IMR-90 (cell line): ENCODE measurements at regions of chr20 and their contacts with region 1.

Region 1: GRCh38 chr20:25486377-25486776 is 78.9 kb downstream of the GINS1 start:
- DNase-seq: peak; percentile 40
- ATAC-seq: peak; percentile 29
- H3K4me3 ChIP-seq: no peak overlapping the region
- H3K27ac ChIP-seq: no peak overlapping the region
- H3K4me1 ChIP-seq: peaks cover 3% of the 10 kb centered on the region
- H3K27me3 ChIP-seq: no peaks in the 10 kb centered on the region
- CTCF ChIP-seq: no peak
- POLR2A ChIP-seq: no peak
- RAD21 ChIP-seq: no peak

Region 2: DNA sequence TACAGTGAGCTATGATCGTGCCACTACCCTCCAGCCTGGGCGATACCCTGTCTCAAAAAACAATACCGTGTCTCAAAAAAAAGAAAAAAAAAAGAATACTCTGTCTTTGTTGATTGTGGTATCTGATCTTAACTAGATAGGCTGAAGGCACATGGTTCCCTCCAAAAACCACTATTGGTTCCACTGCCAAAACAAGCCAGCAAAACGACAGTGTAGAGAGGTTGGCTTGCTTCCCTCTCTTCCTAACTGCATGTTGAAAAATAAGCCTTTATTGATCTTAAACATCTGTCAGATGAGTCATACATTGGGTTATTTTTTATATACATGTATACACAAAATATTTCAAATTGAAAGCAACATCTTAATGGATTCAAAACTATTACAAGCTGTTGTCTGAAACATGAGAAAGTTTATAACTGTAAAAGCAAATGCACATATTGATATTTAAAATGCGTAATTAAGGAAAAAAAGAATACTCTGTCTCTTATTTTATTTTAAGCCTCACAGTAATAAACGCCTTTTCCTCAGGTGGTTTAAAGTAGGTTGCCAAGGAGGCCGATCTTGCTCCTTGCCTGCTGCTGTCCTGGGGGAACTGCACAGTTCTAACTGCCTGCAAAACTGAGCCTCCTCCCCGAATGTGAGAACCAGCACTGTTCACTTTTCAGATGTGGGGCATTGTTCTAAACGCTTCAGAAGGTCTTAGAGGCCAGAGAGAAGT is 105.9 kb after region 1 on chr20:
- CTCF ChIA-PET with region 1: no interaction called
- POLR2A ChIA-PET with region 1: no interaction called
- dilution Hi-C with region 1: no loop called
- in situ Hi-C with region 1: no loop called
- intact Hi-C with region 1: loop called (anchors 10 kb)
- DNase-seq: peak; percentile 39
- ATAC-seq: peak; percentile 58
- H3K4me3 ChIP-seq: no peak overlapping the region
- H3K27ac ChIP-seq: peak overlapping the region; percentile 28; the same call in 1 of the 2 replicates
- H3K4me1 ChIP-seq: peaks cover 6% of the 10 kb centered on the region; the same call in 1 of the 2 replicates
- H3K27me3 ChIP-seq: no peaks in the 10 kb centered on the region
- CTCF ChIP-seq: no peak
- POLR2A ChIP-seq: no peak
- RAD21 ChIP-seq: no peak

Region 3: GRCh38 chr20:25685276-25686080 is 199.1 kb after region 1 on chr20:
- CTCF ChIA-PET with region 1: no interaction called
- POLR2A ChIA-PET with region 1: no interaction called
- dilution Hi-C with region 1: no loop called
- in situ Hi-C with region 1: no loop called
- intact Hi-C with region 1: no loop called
- DNase-seq: no peak
- ATAC-seq: no peak
- H3K4me3 ChIP-seq: no peak overlapping the region
- H3K27ac ChIP-seq: no peak overlapping the region
- H3K4me1 ChIP-seq: no peaks in the 10 kb centered on the region; the same call in 1 of the 2 replicates
- H3K27me3 ChIP-seq: no peaks in the 10 kb centered on the region
- CTCF ChIP-seq: no peak
- POLR2A ChIP-seq: no peak
- RAD21 ChIP-seq: no peak